ENCODE measurements at regions of chrX and their contacts with region 1.

Region 1: GRCh38 chrX:43958529-43958928 is 14.7 kb downstream of the NDP start:
- DNase-seq: no peak

Region 2: DNA sequence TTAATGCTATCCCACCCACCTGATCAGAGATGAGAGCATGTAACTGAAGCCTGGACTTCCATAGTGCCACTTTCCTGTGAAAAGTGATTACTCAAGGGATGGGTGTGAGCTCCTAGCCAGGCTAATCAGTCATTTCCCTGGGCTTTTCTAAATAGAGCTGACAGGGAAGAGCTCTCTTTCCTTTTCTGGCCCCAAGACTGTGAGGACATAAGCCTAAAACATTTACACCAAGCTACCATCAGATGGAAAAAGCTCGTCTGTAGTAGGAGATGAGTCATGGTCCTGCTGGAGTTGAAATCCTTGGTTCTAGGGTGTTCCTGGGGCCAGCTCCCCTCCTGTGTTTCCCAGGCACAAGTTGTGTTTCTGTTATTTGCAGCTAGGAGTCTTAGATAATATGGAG is 67.0 kb after region 1 on chrX:
- intact Hi-C with region 1: loop called (anchors 5 kb)
- DNase-seq: no peak

Region 3: GRCh38 chrX:44189116-44189515 is 230.6 kb after region 1 on chrX:
- intact Hi-C with region 1: no loop called
- DNase-seq: no peak

Region 4: GRCh38 chrX:44244008-44244407 is 285.5 kb after region 1 on chrX:
- intact Hi-C with region 1: loop called (anchors 5 kb)
- DNase-seq: no peak